ENCODE measurements at regions of chr18 and their contacts with region 1.

Region 1: DNA sequence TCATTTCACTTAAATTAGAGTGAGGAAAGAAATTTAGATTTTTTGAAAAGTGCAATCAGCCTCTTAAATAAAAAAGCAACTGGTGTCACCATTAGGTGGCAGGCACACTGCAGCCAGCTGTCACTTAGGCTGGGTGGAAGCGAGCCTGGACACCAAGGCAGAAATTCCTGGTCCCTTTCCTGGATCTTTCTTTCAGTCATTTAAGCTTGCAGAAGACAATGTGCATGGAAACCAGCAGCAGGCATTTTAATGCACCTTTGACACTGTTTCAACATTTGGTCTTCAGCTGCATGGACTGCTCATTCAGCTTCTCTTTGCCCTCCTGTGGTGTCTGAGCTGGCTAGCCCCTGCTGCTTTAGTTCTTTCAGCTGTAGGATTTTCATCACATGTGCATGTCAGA is 61.0 kb downstream of the AQP4 start:
- DNase-seq: no peak
- H3K4me3 ChIP-seq: no peak overlapping the region
- H3K27ac ChIP-seq: no peak overlapping the region
- H3K4me1 ChIP-seq: no peaks in the 10 kb centered on the region
- H3K27me3 ChIP-seq: no peaks in the 10 kb centered on the region; a peak in 1 of 7 replicates
- CTCF ChIP-seq: peak; percentile 51 to 54 (median 51)
- EP300 ChIP-seq: no peak
- POLR2A ChIP-seq: no peak
- RAD21 ChIP-seq: peak; percentile 71 to 76

Region 2: DNA sequence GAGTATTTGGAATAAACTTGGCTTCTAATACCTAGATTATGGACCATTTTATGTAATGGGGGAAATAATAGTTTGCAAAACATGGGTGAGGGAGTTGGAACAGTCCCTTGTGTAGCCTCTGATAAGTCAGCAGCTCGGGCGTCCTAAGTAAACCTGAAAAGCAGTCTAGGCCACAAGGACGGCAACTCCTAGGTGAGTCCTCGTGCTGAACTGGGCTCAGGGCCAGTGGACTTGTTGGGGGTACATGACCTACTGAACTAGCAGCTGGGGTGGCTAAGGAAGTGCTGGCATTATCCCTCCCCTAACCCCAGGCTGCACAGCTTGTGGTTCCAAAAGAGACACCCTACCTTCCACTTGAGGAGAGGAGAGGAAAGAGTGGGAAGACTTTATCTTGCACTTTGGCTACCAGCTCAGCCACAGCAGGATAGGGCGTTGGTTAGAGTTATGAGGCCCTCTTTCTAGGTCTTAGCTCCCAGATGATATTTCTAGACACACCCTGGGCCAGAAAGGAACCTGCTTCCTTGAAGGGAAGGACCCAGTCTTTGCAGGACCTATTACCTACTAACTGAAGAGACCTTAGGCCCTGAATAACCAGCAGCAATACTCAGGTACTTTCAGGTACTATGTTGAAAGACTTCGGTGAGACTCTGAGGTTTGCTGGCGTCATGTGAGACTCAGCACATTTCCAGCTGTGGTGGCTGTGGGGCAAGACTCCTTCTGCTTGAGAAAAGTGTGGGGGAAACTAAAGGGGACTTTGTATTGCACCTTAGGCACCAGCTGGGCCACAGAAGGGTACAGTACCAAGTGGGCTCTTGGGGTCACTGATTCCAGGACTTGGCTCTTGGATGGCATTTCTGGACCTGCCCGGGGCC is 10.1 kb before region 1 on chr18:
- CTCF ChIA-PET with region 1: interaction called, 12 read pairs
- POLR2A ChIA-PET with region 1: no interaction called
- DNase-seq: no peak
- H3K4me3 ChIP-seq: no peak overlapping the region
- H3K27ac ChIP-seq: no peak overlapping the region
- H3K4me1 ChIP-seq: no peaks in the 10 kb centered on the region
- H3K27me3 ChIP-seq: no peaks in the 10 kb centered on the region; a peak in 1 of 7 replicates
- CTCF ChIP-seq: no peak
- EP300 ChIP-seq: no peak
- POLR2A ChIP-seq: no peak
- RAD21 ChIP-seq: no peak

Region 3: GRCh38 chr18:26826656-26827235 is 22.2 kb after region 1 on chr18:
- CTCF ChIA-PET with region 1: interaction called, 19 read pairs
- POLR2A ChIA-PET with region 1: no interaction called
- DNase-seq: no peak
- H3K4me3 ChIP-seq: no peak overlapping the region
- H3K27ac ChIP-seq: no peak overlapping the region
- H3K4me1 ChIP-seq: no peaks in the 10 kb centered on the region
- H3K27me3 ChIP-seq: no peaks in the 10 kb centered on the region
- CTCF ChIP-seq: no peak
- EP300 ChIP-seq: no peak
- POLR2A ChIP-seq: no peak
- RAD21 ChIP-seq: no peak

Region 4: GRCh38 chr18:26919627-26920026 is 115.1 kb after region 1 on chr18:
- CTCF ChIA-PET with region 1: no interaction called
- POLR2A ChIA-PET with region 1: no interaction called
- DNase-seq: no peak
- H3K4me3 ChIP-seq: no peak overlapping the region
- H3K27ac ChIP-seq: no peak overlapping the region
- H3K4me1 ChIP-seq: no peaks in the 10 kb centered on the region
- H3K27me3 ChIP-seq: no peaks in the 10 kb centered on the region
- CTCF ChIP-seq: no peak
- EP300 ChIP-seq: no peak
- POLR2A ChIP-seq: no peak
- RAD21 ChIP-seq: no peak

Region 5: GRCh38 chr18:26963292-26963691 is 158.8 kb after region 1 on chr18:
- CTCF ChIA-PET with region 1: interaction called, 26 read pairs
- POLR2A ChIA-PET with region 1: no interaction called
- DNase-seq: no peak
- H3K4me3 ChIP-seq: no peak overlapping the region
- H3K27ac ChIP-seq: no peak overlapping the region
- H3K4me1 ChIP-seq: no peaks in the 10 kb centered on the region
- H3K27me3 ChIP-seq: no peaks in the 10 kb centered on the region
- CTCF ChIP-seq: peak in 2 of 3 experiments; percentile 24 to 25; a peak in 2 of 4 replicates
- EP300 ChIP-seq: no peak
- POLR2A ChIP-seq: no peak
- RAD21 ChIP-seq: peak; percentile 58

Region 6: DNA sequence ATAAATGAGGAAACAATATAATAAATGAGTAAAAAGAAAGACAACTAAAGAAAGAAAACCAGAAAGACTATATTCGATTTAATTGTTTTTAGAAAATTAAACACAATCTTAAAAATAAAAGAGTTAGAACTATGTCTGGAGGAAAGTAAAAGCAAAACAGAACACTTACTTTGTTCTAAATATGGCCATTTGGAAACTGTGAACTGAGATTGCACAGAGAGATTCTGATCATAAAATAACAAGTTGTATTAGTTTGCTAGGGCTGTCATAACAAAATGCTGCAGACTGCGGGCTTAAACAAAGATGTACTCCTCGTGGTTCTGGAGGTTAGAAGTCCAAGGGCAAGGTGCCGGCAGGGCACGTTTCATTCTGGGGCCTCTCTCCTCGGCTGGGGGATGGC is 189.0 kb after region 1 on chr18:
- CTCF ChIA-PET with region 1: no interaction called
- POLR2A ChIA-PET with region 1: no interaction called
- DNase-seq: no peak
- H3K4me3 ChIP-seq: no peak overlapping the region
- H3K27ac ChIP-seq: no peak overlapping the region
- H3K4me1 ChIP-seq: no peaks in the 10 kb centered on the region
- H3K27me3 ChIP-seq: no peaks in the 10 kb centered on the region
- CTCF ChIP-seq: no peak
- EP300 ChIP-seq: no peak
- POLR2A ChIP-seq: no peak
- RAD21 ChIP-seq: no peak

Region 7: GRCh38 chr18:27223570-27224291 is 419.2 kb after region 1 on chr18:
- CTCF ChIA-PET with region 1: no interaction called
- POLR2A ChIA-PET with region 1: no interaction called
- DNase-seq: no peak
- H3K4me3 ChIP-seq: no peak overlapping the region
- H3K27ac ChIP-seq: no peak overlapping the region
- H3K4me1 ChIP-seq: peaks cover 3 to 11% (median 7%) of the 10 kb centered on the region in 4 experiments
- H3K27me3 ChIP-seq: no peaks in the 10 kb centered on the region
- CTCF ChIP-seq: peak in 1 of 3 experiments; percentile 9; a peak in 1 of 4 replicates
- EP300 ChIP-seq: no peak
- POLR2A ChIP-seq: no peak
- RAD21 ChIP-seq: no peak; a peak in 1 of 4 replicates

Region 8: DNA sequence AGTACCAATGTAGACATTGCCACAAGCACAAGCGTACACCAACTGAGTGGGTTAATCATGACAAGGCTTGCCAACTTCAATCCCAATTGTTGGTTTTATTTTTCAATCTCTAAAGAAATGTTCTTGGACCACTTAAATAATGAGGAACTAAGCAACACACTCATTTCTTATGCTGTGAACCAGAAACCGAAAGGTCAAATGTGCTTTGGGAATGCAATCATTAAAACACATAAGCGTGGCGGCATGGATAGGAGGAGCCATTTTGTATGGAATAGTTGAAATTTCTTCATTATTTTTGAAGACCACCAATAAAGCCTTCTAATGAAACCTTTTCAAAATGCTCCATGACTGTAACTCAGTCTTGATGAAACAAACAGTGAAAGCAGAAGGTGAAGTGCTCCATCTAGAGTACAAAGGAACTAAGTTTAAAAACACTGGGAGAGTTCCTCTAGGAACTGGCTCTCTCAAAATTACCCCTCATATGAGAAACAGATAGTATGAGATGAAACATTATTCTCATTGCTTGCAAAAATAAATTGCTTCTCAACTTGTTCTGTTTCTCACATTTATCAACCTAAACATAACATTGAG is 493.8 kb after region 1 on chr18:
- CTCF ChIA-PET with region 1: interaction called, 12 read pairs
- POLR2A ChIA-PET with region 1: no interaction called
- DNase-seq: no peak
- H3K4me3 ChIP-seq: no peak overlapping the region
- H3K27ac ChIP-seq: no peak overlapping the region
- H3K4me1 ChIP-seq: peaks cover 0 to 2% (median 0%) of the 10 kb centered on the region in 4 experiments; a peak in 1 of 7 replicates
- H3K27me3 ChIP-seq: no peaks in the 10 kb centered on the region
- CTCF ChIP-seq: peak in 2 of 3 experiments; percentile 47 to 52; a peak in 2 of 4 replicates
- EP300 ChIP-seq: no peak
- POLR2A ChIP-seq: no peak
- RAD21 ChIP-seq: peak; percentile 82 to 90